Caco-2 (cell line): ENCODE measurements at regions of chrX and their contacts with region 1.

Region 1: DNA sequence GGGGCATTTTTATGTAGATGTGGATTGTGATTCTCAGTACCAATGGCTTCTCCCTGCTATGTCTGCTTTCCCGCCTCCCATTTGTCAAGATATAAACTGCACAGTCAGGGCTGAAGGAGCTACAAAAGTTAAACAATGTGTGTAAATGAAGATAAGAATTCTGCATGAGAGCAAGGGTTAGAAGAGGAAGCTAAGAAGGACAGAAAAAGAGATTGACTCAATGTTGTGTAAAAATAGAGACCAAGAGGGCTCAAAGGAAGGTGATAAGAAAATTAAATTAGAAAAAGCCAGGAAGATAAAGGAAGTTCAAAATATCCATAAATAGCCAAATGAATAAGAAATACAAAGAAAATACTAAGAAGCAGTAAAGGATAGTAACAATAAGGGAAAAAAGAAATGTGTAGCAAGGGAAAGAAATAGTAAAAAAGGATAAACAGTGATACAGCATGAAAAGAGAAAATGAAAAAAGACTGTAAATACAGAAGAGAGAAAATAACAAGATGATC is 82.5 kb downstream of the AMELX start:
- DNase-seq: peak; percentile 18 to 35
- H3K4me3 ChIP-seq: no peak overlapping the region
- H3K4me3 Mint-ChIP-seq: peak overlapping the region; percentile 28
- H3K27ac Mint-ChIP-seq: peak overlapping the region; percentile 60
- H3K4me1 ChIP-seq: peaks cover 30% of the 10 kb centered on the region
- H3K4me1 Mint-ChIP-seq: peaks cover 10% of the 10 kb centered on the region
- H3K27me3 ChIP-seq: no peaks in the 10 kb centered on the region
- H3K27me3 Mint-ChIP-seq: no peaks in the 10 kb centered on the region
- CTCF ChIP-seq: no peak

Region 2: DNA sequence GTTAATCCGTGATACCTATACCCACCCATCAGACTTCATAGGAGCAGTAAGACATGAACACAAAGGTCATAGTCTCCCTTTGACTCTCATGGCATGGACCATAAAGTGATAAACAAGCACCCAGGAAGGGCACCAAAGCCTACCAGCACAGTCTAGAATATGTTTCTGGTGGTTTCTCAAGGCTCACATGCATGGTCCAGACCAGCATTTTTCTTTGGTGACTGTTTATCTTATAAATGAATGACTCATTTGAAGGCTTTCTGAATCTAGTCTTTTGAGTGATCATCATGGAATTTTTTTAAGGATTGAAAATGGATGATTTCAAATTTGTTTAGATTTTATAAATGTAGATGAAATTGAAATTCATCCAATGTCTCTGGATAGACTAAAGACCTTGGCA is 114.4 kb before region 1 on chrX:
- CTCF ChIA-PET with region 1: no interaction called
- POLR2A ChIA-PET with region 1: no interaction called
- intact Hi-C with region 1: loop called (anchors 10 kb)
- DNase-seq: no peak
- H3K4me3 ChIP-seq: no peak overlapping the region
- H3K4me3 Mint-ChIP-seq: no peak overlapping the region
- H3K27ac Mint-ChIP-seq: no peak overlapping the region
- H3K4me1 ChIP-seq: peaks cover 16% of the 10 kb centered on the region
- H3K4me1 Mint-ChIP-seq: peaks cover 22% of the 10 kb centered on the region
- H3K27me3 ChIP-seq: no peaks in the 10 kb centered on the region
- H3K27me3 Mint-ChIP-seq: no peaks in the 10 kb centered on the region
- CTCF ChIP-seq: no peak

Region 3: GRCh38 chrX:11329021-11329420 is 46.6 kb before region 1 on chrX:
- CTCF ChIA-PET with region 1: no interaction called
- POLR2A ChIA-PET with region 1: no interaction called
- intact Hi-C with region 1: no loop called
- DNase-seq: no peak
- H3K4me3 ChIP-seq: no peak overlapping the region
- H3K4me3 Mint-ChIP-seq: no peak overlapping the region
- H3K27ac Mint-ChIP-seq: no peak overlapping the region
- H3K4me1 ChIP-seq: peaks cover 13% of the 10 kb centered on the region
- H3K4me1 Mint-ChIP-seq: no peaks in the 10 kb centered on the region
- H3K27me3 ChIP-seq: no peaks in the 10 kb centered on the region
- H3K27me3 Mint-ChIP-seq: no peaks in the 10 kb centered on the region
- CTCF ChIP-seq: no peak

Region 4: GRCh38 chrX:11648705-11649519 is 273.2 kb after region 1 on chrX:
- CTCF ChIA-PET with region 1: no interaction called
- POLR2A ChIA-PET with region 1: no interaction called
- intact Hi-C with region 1: no loop called
- DNase-seq: no peak
- H3K4me3 ChIP-seq: no peak overlapping the region
- H3K4me3 Mint-ChIP-seq: no peak overlapping the region
- H3K27ac Mint-ChIP-seq: no peak overlapping the region
- H3K4me1 ChIP-seq: no peaks in the 10 kb centered on the region
- H3K4me1 Mint-ChIP-seq: no peaks in the 10 kb centered on the region
- H3K27me3 ChIP-seq: no peaks in the 10 kb centered on the region
- H3K27me3 Mint-ChIP-seq: no peaks in the 10 kb centered on the region
- CTCF ChIP-seq: no peak